ENCODE measurements at regions of chrX and their contacts with region 1.

Region 1: GRCh38 chrX:136588041-136588788 is 56.2 kb downstream of the VGLL1 start:
- DNase-seq: no peak
- ATAC-seq: peak; percentile 59
- H3K4me3 Mint-ChIP-seq: peak overlapping the region; percentile 32
- H3K27ac Mint-ChIP-seq: peak overlapping the region; percentile 85
- H3K4me1 Mint-ChIP-seq: peaks cover 64% of the 10 kb centered on the region
- H3K27me3 Mint-ChIP-seq: no peaks in the 10 kb centered on the region

Region 2: GRCh38 chrX:136616987-136617685 is 28.9 kb after region 1 on chrX:
- CTCF ChIA-PET with region 1: interaction called, 3 read pairs
- POLR2A ChIA-PET with region 1: no interaction called
- intact Hi-C with region 1: loop called in 1 of 2 experiments (anchors 2 kb)
- DNase-seq: peak; percentile 53
- ATAC-seq: peak; percentile 82
- H3K4me3 Mint-ChIP-seq: peak overlapping the region; percentile 44
- H3K27ac Mint-ChIP-seq: peak overlapping the region; percentile 87
- H3K4me1 Mint-ChIP-seq: peaks cover 79% of the 10 kb centered on the region
- H3K27me3 Mint-ChIP-seq: no peaks in the 10 kb centered on the region

Region 3: DNA sequence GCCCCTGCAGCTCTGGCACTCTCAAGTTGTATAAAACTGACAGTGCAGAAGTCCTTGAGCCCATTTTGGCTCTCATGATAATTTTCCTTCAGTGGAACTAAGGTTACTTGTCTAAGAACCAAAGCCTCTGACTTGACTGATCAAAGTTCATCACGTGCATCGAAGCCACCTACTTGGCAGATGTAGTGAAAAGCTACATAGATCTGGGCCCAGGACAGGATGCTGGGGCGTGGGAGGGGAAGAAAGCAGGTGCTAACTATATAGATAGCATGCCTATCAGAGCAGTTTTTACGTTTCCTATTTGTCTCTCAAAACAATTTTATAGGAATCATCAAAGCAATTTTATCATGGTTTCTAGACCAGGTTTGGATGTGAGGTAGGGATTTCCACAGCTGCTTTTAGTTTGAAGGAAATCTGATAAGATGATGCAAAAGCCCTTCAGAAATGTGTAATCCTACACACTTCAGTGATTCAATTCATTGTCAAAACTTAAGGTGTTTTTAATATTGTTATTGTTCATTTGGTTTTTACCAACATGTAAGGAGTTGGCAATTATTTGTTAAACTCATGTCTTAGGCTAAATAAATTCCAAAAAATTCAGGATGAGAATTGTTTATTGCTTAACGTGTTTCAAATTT is 58.5 kb after region 1 on chrX:
- CTCF ChIA-PET with region 1: interaction called, 3 read pairs
- POLR2A ChIA-PET with region 1: interaction called, 5 read pairs
- intact Hi-C with region 1: loop called (anchors 2 to 5 kb)
- DNase-seq: peak; percentile 84
- ATAC-seq: peak; percentile 60
- H3K4me3 Mint-ChIP-seq: peak overlapping the region; percentile 96
- H3K27ac Mint-ChIP-seq: peak overlapping the region; percentile 100
- H3K4me1 Mint-ChIP-seq: peaks cover 57% of the 10 kb centered on the region
- H3K27me3 Mint-ChIP-seq: no peaks in the 10 kb centered on the region

Region 4: GRCh38 chrX:136666088-136666487 is 77.9 kb after region 1 on chrX:
- CTCF ChIA-PET with region 1: no interaction called
- POLR2A ChIA-PET with region 1: no interaction called
- intact Hi-C with region 1: no loop called
- DNase-seq: no peak
- ATAC-seq: no peak
- H3K4me3 Mint-ChIP-seq: no peak overlapping the region
- H3K27ac Mint-ChIP-seq: peak overlapping the region; percentile 19
- H3K4me1 Mint-ChIP-seq: peaks cover 86% of the 10 kb centered on the region
- H3K27me3 Mint-ChIP-seq: no peaks in the 10 kb centered on the region

Region 5: DNA sequence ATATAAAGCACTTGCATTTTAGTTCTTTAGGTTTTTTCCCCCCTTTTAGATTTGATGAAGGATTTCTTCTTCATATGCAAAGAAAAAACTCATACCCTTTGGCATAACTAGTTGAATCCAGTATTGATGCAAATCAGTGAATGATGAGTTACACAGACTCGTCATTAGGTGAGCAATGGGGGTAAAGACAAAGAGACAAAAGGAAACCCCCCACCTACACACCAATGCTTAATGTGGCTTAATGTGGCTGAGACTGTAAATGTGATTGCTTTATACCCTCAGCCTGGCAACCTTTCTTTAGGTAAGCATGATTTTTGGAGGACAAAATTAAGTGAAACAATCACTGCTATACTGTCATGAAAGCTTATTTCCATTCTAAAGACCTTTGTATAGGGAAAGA is 99.2 kb after region 1 on chrX:
- CTCF ChIA-PET with region 1: no interaction called
- POLR2A ChIA-PET with region 1: no interaction called
- intact Hi-C with region 1: loop called in 1 of 2 experiments (anchors 2 kb)
- DNase-seq: peak; percentile 64
- ATAC-seq: peak; percentile 78
- H3K4me3 Mint-ChIP-seq: peak overlapping the region; percentile 35
- H3K27ac Mint-ChIP-seq: peak overlapping the region; percentile 92
- H3K4me1 Mint-ChIP-seq: peaks cover 51% of the 10 kb centered on the region
- H3K27me3 Mint-ChIP-seq: no peaks in the 10 kb centered on the region

Region 6: DNA sequence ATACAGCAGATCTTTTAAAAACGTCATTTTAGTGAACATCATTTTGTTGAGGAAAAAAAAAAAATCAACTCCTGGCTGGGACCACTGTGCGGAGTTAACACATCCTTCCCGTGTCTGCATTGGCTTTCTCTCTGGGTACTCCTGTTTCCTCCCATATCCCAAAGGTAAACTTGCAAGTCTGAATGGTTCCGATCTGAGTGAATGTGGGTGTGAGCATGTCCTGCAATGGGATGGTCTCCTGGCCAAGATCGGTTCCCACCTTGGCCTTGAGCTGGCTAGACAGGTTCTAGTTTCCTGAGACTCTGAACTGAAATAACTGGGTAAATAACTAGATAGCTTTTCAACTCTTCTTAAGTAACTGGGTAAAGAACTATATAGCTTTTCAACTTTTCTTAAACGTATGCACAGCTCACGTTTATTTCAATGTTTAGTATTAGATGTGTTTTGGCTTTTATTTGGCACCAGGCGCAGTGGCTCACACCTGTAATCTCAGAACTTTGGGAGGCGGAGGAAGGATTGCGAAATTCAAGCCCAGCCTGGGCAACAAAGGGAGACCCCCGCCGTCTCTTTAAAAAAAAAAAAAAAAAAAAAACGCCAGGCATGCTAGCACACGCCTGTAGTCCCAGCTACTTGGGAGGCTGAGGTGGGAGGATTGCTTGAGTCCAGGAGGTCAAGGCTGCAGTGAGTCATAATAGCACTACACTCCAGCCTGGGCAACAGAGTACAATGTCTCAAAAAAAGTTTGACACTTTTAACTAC is 278.3 kb after region 1 on chrX:
- CTCF ChIA-PET with region 1: interaction called, 3 read pairs
- POLR2A ChIA-PET with region 1: no interaction called
- intact Hi-C with region 1: loop called (anchors 10 kb)
- DNase-seq: no peak
- ATAC-seq: no peak
- H3K4me3 Mint-ChIP-seq: peak overlapping the region; percentile 31
- H3K27ac Mint-ChIP-seq: peak overlapping the region; percentile 23
- H3K4me1 Mint-ChIP-seq: peaks cover 46% of the 10 kb centered on the region
- H3K27me3 Mint-ChIP-seq: no peaks in the 10 kb centered on the region

Measured in activated CD4-positive, alpha-beta T cell treated with anti-CD3 and anti-CD28 coated beads for 36 hours (primary cell).